Activated CD4-positive, alpha-beta T cell treated with anti-CD3 and anti-CD28 coated beads, Interleukin-2, amount 10 ng/mL, durations not matched to agents 24 days and 14 days (primary cell): ENCODE measurements at regions of chr20 and their contacts with region 1.

Region 1: DNA sequence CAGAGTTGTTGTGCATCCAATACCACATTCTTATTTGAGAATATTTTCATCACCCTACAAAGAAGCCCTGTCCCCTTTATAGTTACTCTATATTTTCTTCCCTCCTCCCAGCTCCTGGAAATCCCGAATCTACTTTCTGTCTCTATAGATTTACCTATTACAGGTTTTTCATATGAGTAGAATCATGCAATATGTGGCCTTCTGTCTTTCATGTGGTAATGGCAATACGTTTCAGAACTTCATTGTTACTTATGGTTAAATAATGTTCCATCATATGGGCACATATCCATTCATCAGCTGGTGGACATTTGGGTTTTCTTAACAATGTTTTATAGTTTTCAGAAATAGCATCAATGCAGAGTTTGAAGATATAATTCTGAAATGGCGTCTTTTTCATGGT is 17.1 kb downstream of the GINS1 start:
- DNase-seq: no peak
- H3K4me3 Mint-ChIP-seq: no peak overlapping the region
- H3K27ac Mint-ChIP-seq: no peak overlapping the region
- H3K4me1 Mint-ChIP-seq: peaks cover 10% of the 10 kb centered on the region
- H3K27me3 Mint-ChIP-seq: no peaks in the 10 kb centered on the region

Region 2: DNA sequence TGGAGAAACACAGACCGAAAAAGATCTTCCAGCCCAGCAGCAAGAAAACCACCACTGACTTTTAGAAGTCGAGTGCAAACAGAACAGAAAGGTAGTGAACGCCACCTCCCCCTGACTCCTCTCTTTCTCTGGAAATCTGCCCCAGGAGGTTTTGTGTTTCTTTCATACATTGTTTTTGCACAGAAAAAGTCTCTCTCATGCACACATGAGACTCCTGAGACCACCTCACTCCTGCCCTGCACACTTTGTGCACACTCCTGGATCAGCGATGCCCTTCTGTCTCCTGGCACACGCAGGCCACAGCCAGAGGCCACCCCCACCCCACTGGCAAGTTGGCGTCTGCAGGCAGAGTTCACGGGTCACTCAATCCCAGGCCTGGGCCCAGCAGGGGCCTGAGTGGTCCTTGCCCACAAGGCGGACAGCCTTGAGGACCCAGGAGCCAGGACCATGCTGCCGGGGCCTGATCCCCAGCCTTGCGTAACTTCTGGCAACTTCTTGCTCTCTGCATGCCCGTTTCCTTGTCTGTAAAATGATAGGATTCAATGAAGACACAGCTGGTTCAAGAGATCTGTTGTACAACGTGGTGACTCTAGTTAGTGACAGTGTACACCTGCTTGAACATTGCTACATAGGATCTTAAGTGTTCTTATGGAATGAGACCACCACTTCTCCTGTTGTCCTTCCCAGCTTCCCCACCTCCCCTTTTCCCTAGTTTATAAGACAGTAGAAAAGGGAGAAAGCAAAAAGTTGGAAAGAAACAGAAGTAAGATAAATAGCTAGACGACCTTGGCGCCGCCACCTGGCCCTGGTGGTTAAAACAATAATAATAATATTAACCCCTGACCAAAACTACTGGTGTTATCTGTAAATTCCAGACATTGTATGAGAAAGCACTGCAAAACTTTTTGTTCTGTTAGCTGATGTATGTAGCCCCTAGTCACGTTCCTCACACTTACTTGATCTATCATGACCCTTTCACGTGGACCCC is 505.7 kb before region 1 on chr20:
- intact Hi-C with region 1: no loop called
- DNase-seq: peak; percentile 55
- H3K4me3 Mint-ChIP-seq: no peak overlapping the region
- H3K27ac Mint-ChIP-seq: peak overlapping the region; percentile 22
- H3K4me1 Mint-ChIP-seq: peaks cover 7% of the 10 kb centered on the region
- H3K27me3 Mint-ChIP-seq: peaks cover 4% of the 10 kb centered on the region

Region 3: GRCh38 chr20:25336561-25337422 is 87.7 kb before region 1 on chr20:
- intact Hi-C with region 1: no loop called
- DNase-seq: no peak
- H3K4me3 Mint-ChIP-seq: no peak overlapping the region
- H3K27ac Mint-ChIP-seq: no peak overlapping the region
- H3K4me1 Mint-ChIP-seq: peaks cover 3% of the 10 kb centered on the region
- H3K27me3 Mint-ChIP-seq: no peaks in the 10 kb centered on the region

Region 4: GRCh38 chr20:25437153-25437581 is 12.6 kb after region 1 on chr20:
- intact Hi-C with region 1: loop called (anchors 1 kb)
- DNase-seq: no peak
- H3K4me3 Mint-ChIP-seq: no peak overlapping the region
- H3K27ac Mint-ChIP-seq: no peak overlapping the region
- H3K4me1 Mint-ChIP-seq: peaks cover 3% of the 10 kb centered on the region
- H3K27me3 Mint-ChIP-seq: no peaks in the 10 kb centered on the region